Naive thymus-derived CD4-positive, alpha-beta T cell (primary cell): ENCODE measurements at regions of chr19 and their contacts with region 1.

Region 1: GRCh38 chr19:1074544-1075283 is 7.7 kb downstream of the ARHGAP45 start:
- DNase-seq: peak; percentile 81 to 95 (median 93)
- ATAC-seq: peak; percentile 61
- H3K4me3 ChIP-seq: peak overlapping the region; percentile 68
- H3K4me3 Mint-ChIP-seq: peak overlapping the region; percentile 80 to 97 (median 89)
- H3K27ac ChIP-seq: peak overlapping the region; percentile 92
- H3K27ac Mint-ChIP-seq: peak overlapping the region; percentile 91 to 100 (median 99)
- H3K4me1 ChIP-seq: peaks cover 67 to 72% of the 10 kb centered on the region in 2 donors
- H3K4me1 Mint-ChIP-seq: peaks cover 27 to 53% (median 43%) of the 10 kb centered on the region in 7 donors
- H3K27me3 ChIP-seq: no peaks in the 10 kb centered on the region
- H3K27me3 Mint-ChIP-seq: no peaks in the 10 kb centered on the region

Region 2: DNA sequence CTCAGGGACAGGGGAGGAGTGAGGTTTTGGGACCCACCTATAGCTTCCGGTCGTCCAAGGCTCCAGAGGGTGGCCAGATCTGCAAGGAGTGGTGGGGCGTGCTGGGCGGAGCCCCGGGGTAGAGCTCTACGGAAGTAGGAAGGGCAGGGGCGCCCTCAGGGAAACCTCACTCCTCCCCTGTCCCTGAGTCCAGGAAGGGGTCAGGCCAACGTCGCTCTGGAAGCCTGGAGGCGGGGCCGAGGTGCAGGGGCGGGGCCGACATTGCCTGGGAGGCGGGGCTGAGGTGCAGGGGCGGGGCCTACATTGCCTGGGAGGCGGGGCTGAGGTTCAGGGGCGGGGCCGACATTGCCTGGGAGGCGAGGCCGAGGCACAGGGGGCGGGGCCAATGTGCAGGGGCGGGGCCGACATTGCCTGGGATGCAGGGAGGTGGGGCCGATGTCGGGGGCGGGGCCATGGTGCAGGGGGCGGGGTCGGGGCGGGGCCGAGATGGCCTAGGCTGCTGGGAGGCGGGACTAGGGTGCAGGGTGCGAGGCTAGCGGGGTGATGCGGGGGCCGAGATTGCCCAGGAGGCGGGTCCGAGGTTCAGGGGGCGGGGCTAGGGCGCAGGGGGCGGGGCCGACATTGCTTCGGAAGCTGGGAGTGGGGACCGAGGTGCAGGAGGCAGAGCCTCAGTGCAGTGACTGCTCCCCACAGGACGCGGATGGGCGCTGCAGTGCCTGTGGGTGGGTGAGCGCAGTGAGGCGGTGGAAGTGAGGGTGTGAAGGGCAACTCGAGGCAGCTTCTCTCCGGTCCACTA is 370.9 kb before region 1 on chr19:
- CTCF ChIA-PET with region 1: no interaction called
- POLR2A ChIA-PET with region 1: no interaction called
- intact Hi-C with region 1: no loop called
- DNase-seq: peak; percentile 42 to 73 (median 50)
- ATAC-seq: peak; percentile 93
- H3K4me3 ChIP-seq: peak overlapping the region; percentile 13
- H3K4me3 Mint-ChIP-seq: peak overlapping the region in 7 of 10 donors; percentile 17 to 79 (median 42)
- H3K27ac ChIP-seq: no peak overlapping the region
- H3K27ac Mint-ChIP-seq: peak overlapping the region in 1 of 9 donors; percentile 3
- H3K4me1 ChIP-seq: peaks cover 0 to 6% of the 10 kb centered on the region in 2 donors
- H3K4me1 Mint-ChIP-seq: peaks cover 0 to 20% (median 12%) of the 10 kb centered on the region in 7 donors
- H3K27me3 ChIP-seq: peaks cover 0 to 5% of the 10 kb centered on the region in 2 donors
- H3K27me3 Mint-ChIP-seq: peaks cover 5 to 27% (median 9%) of the 10 kb centered on the region in 5 donors

Region 3: DNA sequence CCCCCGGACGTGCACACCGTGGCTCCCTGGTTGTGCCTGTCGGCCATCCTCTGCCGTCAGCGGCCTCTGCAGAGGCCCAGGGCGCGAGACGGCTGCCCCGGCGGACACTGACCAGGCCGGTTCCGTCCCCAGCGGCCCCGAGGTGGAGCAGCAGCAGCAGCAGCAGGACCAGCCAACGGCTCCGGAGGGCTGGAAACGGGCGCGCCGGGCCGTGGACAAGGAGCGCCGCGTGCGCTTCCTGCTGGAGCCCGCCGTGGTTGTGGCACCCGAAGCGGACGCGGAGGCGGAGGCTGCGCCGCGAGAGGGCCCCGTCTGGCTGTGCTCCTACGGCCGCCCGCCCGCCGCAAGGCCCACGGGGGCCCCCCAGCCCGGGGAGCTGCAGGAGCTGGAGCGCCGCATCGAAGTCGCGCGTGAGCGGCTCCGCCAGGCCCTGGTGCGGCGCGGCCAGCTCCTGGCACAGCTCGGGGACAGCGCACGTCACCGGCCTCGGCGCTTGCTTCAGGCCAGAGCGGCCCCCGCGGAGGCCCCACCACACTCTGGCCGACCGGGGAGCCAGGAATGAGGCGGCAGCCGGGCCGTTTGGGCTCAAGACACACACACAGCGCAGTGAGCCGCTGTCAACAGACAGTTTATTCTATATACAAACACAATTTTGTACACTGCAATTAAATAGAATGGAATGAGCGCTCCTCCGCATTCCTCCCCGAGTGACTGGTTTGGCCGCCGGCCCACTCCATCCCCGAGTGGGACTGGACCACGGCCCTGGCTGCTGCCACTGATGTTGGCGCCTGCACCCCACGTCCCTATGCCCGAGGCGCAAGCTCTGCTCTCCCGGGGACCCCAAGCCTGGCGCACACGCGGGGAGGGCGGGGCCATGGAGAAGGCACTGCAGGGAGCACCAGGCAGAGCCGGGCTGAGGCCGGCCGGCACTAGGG is 65.4 kb before region 1 on chr19:
- CTCF ChIA-PET with region 1: no interaction called
- POLR2A ChIA-PET with region 1: no interaction called
- intact Hi-C with region 1: no loop called
- DNase-seq: no peak
- ATAC-seq: no peak
- H3K4me3 ChIP-seq: no peak overlapping the region
- H3K4me3 Mint-ChIP-seq: no peak overlapping the region
- H3K27ac ChIP-seq: no peak overlapping the region
- H3K27ac Mint-ChIP-seq: no peak overlapping the region
- H3K4me1 ChIP-seq: no peaks in the 10 kb centered on the region
- H3K4me1 Mint-ChIP-seq: peaks cover 0 to 8% (median 0%) of the 10 kb centered on the region in 7 donors
- H3K27me3 ChIP-seq: no peaks in the 10 kb centered on the region
- H3K27me3 Mint-ChIP-seq: no peaks in the 10 kb centered on the region

Region 4: DNA sequence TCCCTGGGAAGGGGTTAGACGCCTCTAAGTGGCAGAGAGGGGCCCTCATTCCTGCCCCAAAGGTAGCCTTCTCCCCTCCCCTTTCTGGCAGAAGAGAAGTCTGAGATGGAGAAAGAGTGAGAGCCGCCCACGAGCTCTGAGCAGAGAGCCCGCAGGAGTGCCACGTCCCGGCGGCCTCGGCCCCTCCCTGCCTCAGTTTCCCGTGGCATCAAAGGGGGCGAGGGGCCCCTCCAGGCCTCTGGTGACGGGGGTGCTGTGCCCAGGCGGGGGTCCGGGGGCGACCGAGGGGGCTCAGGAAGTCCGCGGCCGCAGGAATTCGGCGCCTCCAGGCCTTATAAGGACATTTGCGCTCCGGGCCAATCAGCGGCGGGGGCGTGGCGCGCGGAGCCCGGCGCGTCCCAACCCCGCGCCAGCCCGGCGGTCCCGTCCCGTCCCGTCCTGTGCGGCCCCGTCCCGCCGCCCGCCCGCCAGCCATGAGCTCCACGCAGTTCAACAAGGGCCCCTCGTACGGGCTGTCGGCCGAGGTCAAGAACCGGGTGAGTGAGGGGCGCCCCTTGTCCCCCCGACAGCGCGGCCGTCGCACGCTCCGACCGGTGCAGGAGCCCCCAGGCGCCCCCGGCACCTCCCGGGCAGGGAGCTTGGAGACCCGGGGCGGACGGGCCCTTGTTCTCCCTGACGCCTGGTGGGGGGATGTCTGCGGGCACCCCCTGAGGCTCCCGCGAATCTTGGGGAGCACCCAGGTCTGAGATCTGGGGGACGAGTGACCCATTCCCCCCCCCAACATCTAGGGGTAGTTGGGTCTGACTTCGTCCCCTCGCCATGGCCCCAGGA is 48.3 kb before region 1 on chr19 and contains the start of gene CNN2:
- CTCF ChIA-PET with region 1: interaction called, 10 read pairs
- POLR2A ChIA-PET with region 1: interaction called, 495 read pairs
- intact Hi-C with region 1: loop called in 1 of 2 experiments (anchors 1 kb)
- DNase-seq: peak in 8 of 9 donors; percentile 49 to 85 (median 58)
- ATAC-seq: peak; percentile 49
- H3K4me3 ChIP-seq: peak within 1 kb of the TSS; percentile 99
- H3K4me3 Mint-ChIP-seq: peak within 1 kb of the TSS; percentile 93 to 99 (median 97)
- H3K27ac ChIP-seq: peak within 1 kb of the TSS; percentile 85
- H3K27ac Mint-ChIP-seq: peak within 1 kb of the TSS; percentile 88 to 98 (median 94)
- H3K4me1 ChIP-seq: peaks cover 21 to 31% of the 10 kb centered on the region in 2 donors
- H3K4me1 Mint-ChIP-seq: peaks cover 0 to 40% (median 26%) of the 10 kb centered on the region in 7 donors
- H3K27me3 ChIP-seq: no peaks in the 10 kb centered on the region
- H3K27me3 Mint-ChIP-seq: peaks cover 0 to 5% (median 0%) of the 10 kb centered on the region in 5 donors
- total RNA-seq, gene CNN2: 234 to 440 (median 240) TPM

Region 5: GRCh38 chr19:1057176-1057855 is 17.4 kb before region 1 on chr19:
- CTCF ChIA-PET with region 1: interaction called, 13 read pairs
- POLR2A ChIA-PET with region 1: interaction called, 2,022 read pairs
- intact Hi-C with region 1: no loop called
- DNase-seq: peak in 4 of 9 donors; percentile 35 to 54 (median 46)
- ATAC-seq: peak; percentile 67
- H3K4me3 ChIP-seq: no peak overlapping the region
- H3K4me3 Mint-ChIP-seq: peak overlapping the region in 6 of 10 donors; percentile 13 to 64 (median 48)
- H3K27ac ChIP-seq: peak overlapping the region; percentile 10
- H3K27ac Mint-ChIP-seq: peak overlapping the region; percentile 28 to 93 (median 79)
- H3K4me1 ChIP-seq: peaks cover 14 to 15% of the 10 kb centered on the region in 2 donors
- H3K4me1 Mint-ChIP-seq: peaks cover 7 to 33% (median 23%) of the 10 kb centered on the region in 7 donors
- H3K27me3 ChIP-seq: no peaks in the 10 kb centered on the region
- H3K27me3 Mint-ChIP-seq: no peaks in the 10 kb centered on the region

Region 6: GRCh38 chr19:1087813-1088415 is 13.2 kb after region 1 on chr19:
- CTCF ChIA-PET with region 1: interaction called, 11 read pairs
- POLR2A ChIA-PET with region 1: interaction called, 2,022 read pairs
- intact Hi-C with region 1: loop called (anchors 1 to 2 kb)
- DNase-seq: peak in 7 of 9 donors; percentile 65 to 71 (median 67)
- ATAC-seq: peak; percentile 72
- H3K4me3 ChIP-seq: no peak overlapping the region
- H3K4me3 Mint-ChIP-seq: peak overlapping the region; percentile 23 to 83 (median 72)
- H3K27ac ChIP-seq: peak overlapping the region; percentile 84
- H3K27ac Mint-ChIP-seq: peak overlapping the region; percentile 74 to 98 (median 93)
- H3K4me1 ChIP-seq: peaks cover 28 to 32% of the 10 kb centered on the region in 2 donors
- H3K4me1 Mint-ChIP-seq: peaks cover 26 to 59% (median 36%) of the 10 kb centered on the region in 7 donors
- H3K27me3 ChIP-seq: no peaks in the 10 kb centered on the region
- H3K27me3 Mint-ChIP-seq: no peaks in the 10 kb centered on the region

Region 7: DNA sequence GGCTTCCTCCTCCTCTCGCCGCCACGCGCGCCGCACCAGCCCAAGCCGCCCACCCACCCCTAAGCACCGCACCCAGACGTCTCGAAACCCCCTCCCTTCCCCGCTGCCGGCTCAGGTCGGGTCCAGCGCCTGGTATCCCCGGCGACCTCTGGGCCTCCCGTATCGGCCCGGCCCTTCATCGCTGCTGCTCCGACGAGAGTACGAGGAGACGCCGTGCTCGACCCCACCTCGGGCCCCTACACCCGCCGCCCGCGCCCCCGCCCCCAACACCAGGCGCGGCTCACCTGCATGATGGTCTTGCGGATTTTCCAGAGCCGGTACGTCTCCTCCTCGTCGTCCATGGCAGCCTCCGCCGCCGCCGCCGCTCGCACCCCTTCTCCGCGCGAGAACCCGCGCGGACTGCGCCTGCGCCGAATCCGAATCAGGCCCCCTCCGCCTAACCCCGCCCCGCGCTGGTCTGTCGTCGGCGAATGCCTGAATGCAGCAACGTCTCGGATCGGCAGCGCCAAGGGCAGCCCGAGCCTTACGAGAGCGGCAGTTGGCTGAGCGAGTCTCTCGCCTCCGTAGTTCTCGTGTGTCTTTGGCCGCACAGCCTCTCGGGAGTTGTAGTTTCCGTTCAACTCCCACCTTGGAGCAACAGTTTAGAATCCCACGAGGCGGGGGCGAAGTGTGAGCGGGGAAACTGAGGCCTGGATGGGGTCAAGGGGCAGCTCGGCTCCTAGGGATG is 20.4 kb after region 1 on chr19 and contains the start of gene POLR2E:
- CTCF ChIA-PET with region 1: interaction called, 11 read pairs
- POLR2A ChIA-PET with region 1: interaction called, 2,022 read pairs
- intact Hi-C with region 1: loop called (anchors 2 to 5 kb)
- DNase-seq: peak; percentile 97 to 99 (median 99)
- ATAC-seq: peak; percentile 98
- H3K4me3 ChIP-seq: peak within 1 kb of the TSS; percentile 68
- H3K4me3 Mint-ChIP-seq: peak within 1 kb of the TSS; percentile 80 to 97 (median 92)
- H3K27ac ChIP-seq: peak within 1 kb of the TSS; percentile 71
- H3K27ac Mint-ChIP-seq: peak within 1 kb of the TSS; percentile 87 to 97 (median 93)
- H3K4me1 ChIP-seq: peaks cover 18 to 23% of the 10 kb centered on the region in 2 donors
- H3K4me1 Mint-ChIP-seq: peaks cover 10 to 59% (median 44%) of the 10 kb centered on the region in 7 donors
- H3K27me3 ChIP-seq: no peaks in the 10 kb centered on the region
- H3K27me3 Mint-ChIP-seq: no peaks in the 10 kb centered on the region
- total RNA-seq, gene POLR2E: 75.3 to 157 (median 82.1) TPM

Region 8: GRCh38 chr19:1249298-1249989 is 174.7 kb after region 1 on chr19:
- CTCF ChIA-PET with region 1: interaction called, 3 read pairs
- POLR2A ChIA-PET with region 1: interaction called, 3 read pairs
- intact Hi-C with region 1: loop called in 1 of 2 experiments (anchors 2 kb)
- DNase-seq: peak; percentile 88 to 97 (median 94)
- ATAC-seq: peak; percentile 74
- H3K4me3 ChIP-seq: peak overlapping the region; percentile 63
- H3K4me3 Mint-ChIP-seq: peak overlapping the region; percentile 80 to 95 (median 88)
- H3K27ac ChIP-seq: peak overlapping the region; percentile 94
- H3K27ac Mint-ChIP-seq: peak overlapping the region; percentile 62 to 95 (median 89)
- H3K4me1 ChIP-seq: peaks cover 22 to 27% of the 10 kb centered on the region in 2 donors
- H3K4me1 Mint-ChIP-seq: peaks cover 0 to 11% (median 10%) of the 10 kb centered on the region in 7 donors
- H3K27me3 ChIP-seq: no peaks in the 10 kb centered on the region
- H3K27me3 Mint-ChIP-seq: no peaks in the 10 kb centered on the region

Region 9: DNA sequence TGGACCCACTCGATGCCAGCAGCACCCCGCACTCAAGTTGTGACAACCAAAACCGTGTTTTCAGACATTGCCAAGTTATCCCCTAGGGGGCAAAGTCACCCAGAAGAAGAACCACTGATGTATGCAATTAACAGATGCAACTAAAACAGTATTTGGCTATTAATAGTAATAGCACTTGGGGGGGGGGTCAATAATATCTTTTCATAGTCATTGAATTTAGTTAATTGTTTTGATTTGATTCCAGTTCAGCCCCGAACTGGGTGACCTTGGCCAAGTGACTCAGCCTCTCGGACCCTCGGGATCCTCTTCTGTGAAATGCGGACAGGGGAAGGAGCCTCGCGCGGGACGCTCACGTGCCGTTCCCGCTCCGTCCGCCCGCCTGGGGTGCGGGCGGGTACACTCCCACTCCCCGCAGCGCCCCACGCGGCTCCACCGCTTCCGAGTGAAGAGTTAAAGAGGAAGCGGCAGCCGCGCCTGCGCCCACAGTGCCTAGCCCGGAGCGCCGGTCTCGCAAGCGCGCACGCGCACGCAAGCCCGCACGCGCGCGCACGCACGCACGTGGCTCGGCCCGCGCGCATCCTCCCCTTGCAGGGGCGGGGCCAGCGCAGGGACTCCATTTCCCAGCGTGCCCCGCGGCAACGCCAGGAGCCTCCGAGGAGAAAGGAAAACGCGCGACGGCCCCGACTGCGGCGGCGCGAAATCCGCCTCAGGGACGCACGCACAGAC is 332.2 kb after region 1 on chr19:
- CTCF ChIA-PET with region 1: no interaction called
- POLR2A ChIA-PET with region 1: no interaction called
- intact Hi-C with region 1: no loop called
- DNase-seq: peak; percentile 99 to 100 (median 100)
- ATAC-seq: peak; percentile 93
- H3K4me3 ChIP-seq: peak overlapping the region; percentile 40
- H3K4me3 Mint-ChIP-seq: peak overlapping the region; percentile 72 to 89 (median 80)
- H3K27ac ChIP-seq: peak overlapping the region; percentile 98
- H3K27ac Mint-ChIP-seq: peak overlapping the region; percentile 50 to 93 (median 85)
- H3K4me1 ChIP-seq: peaks cover 38 to 40% of the 10 kb centered on the region in 2 donors
- H3K4me1 Mint-ChIP-seq: peaks cover 33 to 53% (median 45%) of the 10 kb centered on the region in 7 donors
- H3K27me3 ChIP-seq: no peaks in the 10 kb centered on the region
- H3K27me3 Mint-ChIP-seq: peaks cover 0 to 9% (median 0%) of the 10 kb centered on the region in 5 donors